ENCODE measurements at regions of chr3 and their contacts with region 1.

Region 1: DNA sequence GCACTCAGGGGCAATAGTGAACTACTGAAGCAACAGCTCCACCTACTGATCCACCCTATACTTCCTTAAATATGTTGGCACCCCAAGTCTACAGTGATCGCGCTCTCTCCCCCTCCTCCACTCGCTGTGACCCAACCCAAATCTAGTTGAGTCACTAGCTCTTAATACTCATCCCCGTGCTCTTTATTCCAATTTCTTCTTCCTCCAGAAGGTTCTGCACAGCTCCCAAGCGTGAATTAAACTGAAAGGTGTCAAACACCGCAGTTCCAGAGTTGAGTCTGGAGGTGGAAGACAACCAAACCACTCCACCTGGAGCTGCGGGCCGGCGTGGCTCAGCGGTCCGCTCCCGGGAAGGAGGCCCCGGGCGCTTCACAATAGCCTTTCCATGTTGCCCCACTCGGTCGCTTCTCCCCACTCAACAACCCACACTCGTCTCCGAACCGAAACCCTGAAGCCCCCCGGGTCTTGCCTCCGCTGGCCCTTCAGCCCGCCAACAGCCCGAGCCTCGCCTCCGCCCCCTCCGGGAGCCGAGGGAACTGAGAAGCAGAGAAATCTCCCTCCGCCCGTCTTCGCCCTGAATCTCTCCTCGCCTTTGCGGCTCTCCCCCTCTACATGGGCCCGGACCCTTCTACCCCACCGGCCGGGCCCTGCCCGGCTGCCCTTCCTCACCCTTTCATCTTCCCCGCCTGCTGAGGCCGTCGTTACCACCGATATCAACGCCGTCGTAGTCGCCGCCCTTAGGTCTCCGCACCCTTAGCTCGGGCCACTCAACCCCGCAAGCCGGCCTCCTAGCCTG is 578 bp downstream of the NAA50 start:
- DNase-seq: peak; percentile 47 to 85 (median 68)
- ATAC-seq: peak; percentile 78
- H3K4me3 ChIP-seq: peak overlapping the region; percentile 90
- H3K27ac ChIP-seq: peak overlapping the region; percentile 98
- H3K4me1 ChIP-seq: peaks cover 7 to 11% of the 10 kb centered on the region in 2 experiments
- H3K27me3 ChIP-seq: no peaks in the 10 kb centered on the region
- CTCF ChIP-seq: peak; percentile 60 to 77 (median 76); a peak in 5 of 6 replicates
- EP300 ChIP-seq: no peak
- POLR2A ChIP-seq: no peak
- RAD21 ChIP-seq: peak; percentile 48 to 53; a peak in 3 of 4 replicates

Region 2: GRCh38 chr3:113507501-113508067 is 237.9 kb before region 1 on chr3:
- CTCF ChIA-PET with region 1: no interaction called
- POLR2A ChIA-PET with region 1: no interaction called
- in situ Hi-C with region 1: no loop called
- intact Hi-C with region 1: no loop called
- DNase-seq: no peak
- ATAC-seq: no peak
- H3K4me3 ChIP-seq: no peak overlapping the region
- H3K27ac ChIP-seq: no peak overlapping the region
- H3K4me1 ChIP-seq: no peaks in the 10 kb centered on the region
- H3K27me3 ChIP-seq: no peaks in the 10 kb centered on the region
- CTCF ChIP-seq: no peak
- EP300 ChIP-seq: no peak
- POLR2A ChIP-seq: no peak
- RAD21 ChIP-seq: no peak

Region 3: GRCh38 chr3:113696658-113697499 is 48.6 kb before region 1 on chr3:
- CTCF ChIA-PET with region 1: no interaction called
- POLR2A ChIA-PET with region 1: no interaction called
- in situ Hi-C with region 1: no loop called
- intact Hi-C with region 1: loop called (anchors 2 kb)
- DNase-seq: peak; percentile 93 to 98 (median 96)
- ATAC-seq: peak; percentile 96
- H3K4me3 ChIP-seq: peak overlapping the region; percentile 73
- H3K27ac ChIP-seq: peak overlapping the region; percentile 77
- H3K4me1 ChIP-seq: peaks cover 0 to 5% of the 10 kb centered on the region in 2 experiments; a peak in 2 of 5 replicates
- H3K27me3 ChIP-seq: no peaks in the 10 kb centered on the region
- CTCF ChIP-seq: peak in 1 of 3 experiments; percentile 11; a peak in 1 of 6 replicates
- EP300 ChIP-seq: no peak
- POLR2A ChIP-seq: no peak
- RAD21 ChIP-seq: no peak